Activated CD4-positive, alpha-beta T cell treated with anti-CD3 and anti-CD28 coated beads, Interleukin-2, amount 10 ng/mL, durations not matched to agents 7 days and 5 days (primary cell): ENCODE measurements at regions of chr6 and their contacts with region 1.

Region 1: DNA sequence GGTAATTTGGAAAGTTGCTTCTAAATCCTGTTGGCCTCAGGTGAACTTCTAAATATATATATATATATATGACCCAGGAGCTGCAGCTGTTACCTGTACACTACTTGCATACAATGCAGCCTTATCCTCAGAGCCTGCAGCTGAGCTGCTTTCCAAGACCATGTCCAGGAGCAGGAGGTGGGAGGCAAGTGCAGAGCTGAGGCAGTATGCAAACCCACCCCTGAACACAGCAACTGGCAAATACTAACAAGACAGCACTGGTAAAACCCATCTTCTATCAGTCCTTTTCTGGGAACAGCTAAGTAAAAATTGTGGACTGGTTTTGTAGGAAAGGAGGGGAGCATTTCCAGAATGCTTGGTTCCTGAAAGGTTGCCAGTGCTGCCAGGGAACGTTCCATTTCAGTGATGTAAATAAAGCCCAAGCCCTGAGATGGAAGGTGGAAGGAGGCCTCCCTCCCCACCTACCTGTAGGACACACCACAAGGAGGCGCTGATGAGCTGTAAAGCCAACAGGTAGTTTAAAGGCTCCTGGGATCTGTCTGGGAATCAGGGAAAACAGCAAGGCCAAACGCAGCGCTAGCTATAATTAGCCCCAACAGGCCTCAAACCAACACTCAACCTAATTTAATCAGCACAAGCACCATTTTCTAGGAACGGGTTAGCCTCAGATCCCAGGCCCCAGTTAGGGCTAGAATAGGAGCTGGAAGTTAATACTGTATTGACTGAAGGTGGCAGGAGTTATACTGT is 93.8 kb upstream of the MAP7 start:
- DNase-seq: peak; percentile 88
- H3K4me3 Mint-ChIP-seq: no peak overlapping the region
- H3K27ac Mint-ChIP-seq: no peak overlapping the region
- H3K4me1 Mint-ChIP-seq: peaks cover 6% of the 10 kb centered on the region
- H3K27me3 Mint-ChIP-seq: no peaks in the 10 kb centered on the region

Region 2: GRCh38 chr6:136582711-136583471 is 61.1 kb before region 1 on chr6:
- CTCF ChIA-PET with region 1: no interaction called
- POLR2A ChIA-PET with region 1: no interaction called
- DNase-seq: no peak
- H3K4me3 Mint-ChIP-seq: no peak overlapping the region
- H3K27ac Mint-ChIP-seq: no peak overlapping the region
- H3K4me1 Mint-ChIP-seq: no peaks in the 10 kb centered on the region
- H3K27me3 Mint-ChIP-seq: no peaks in the 10 kb centered on the region

Region 3: DNA sequence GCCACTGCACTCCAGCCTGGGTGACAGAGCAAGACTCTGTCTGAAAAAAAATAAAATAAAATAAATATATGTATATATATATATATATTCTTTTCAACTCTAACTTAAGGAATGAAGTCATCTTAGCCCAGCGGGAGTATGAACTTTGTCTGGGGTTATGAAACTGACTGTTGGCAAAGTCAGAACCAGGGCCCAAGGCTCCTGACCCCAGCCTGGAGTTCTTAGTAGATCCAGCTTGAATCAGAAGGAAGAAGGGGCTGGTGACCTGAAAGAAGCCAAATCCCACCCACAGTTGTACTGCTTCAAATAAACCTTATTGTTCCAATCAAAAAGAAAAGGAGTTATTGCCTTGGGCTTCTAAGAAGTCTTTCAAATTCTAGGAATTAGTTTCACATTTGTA is 10.7 kb before region 1 on chr6:
- CTCF ChIA-PET with region 1: interaction called, 20 read pairs
- POLR2A ChIA-PET with region 1: no interaction called
- DNase-seq: no peak
- H3K4me3 Mint-ChIP-seq: no peak overlapping the region
- H3K27ac Mint-ChIP-seq: no peak overlapping the region
- H3K4me1 Mint-ChIP-seq: peaks cover 7% of the 10 kb centered on the region
- H3K27me3 Mint-ChIP-seq: no peaks in the 10 kb centered on the region

Region 4: DNA sequence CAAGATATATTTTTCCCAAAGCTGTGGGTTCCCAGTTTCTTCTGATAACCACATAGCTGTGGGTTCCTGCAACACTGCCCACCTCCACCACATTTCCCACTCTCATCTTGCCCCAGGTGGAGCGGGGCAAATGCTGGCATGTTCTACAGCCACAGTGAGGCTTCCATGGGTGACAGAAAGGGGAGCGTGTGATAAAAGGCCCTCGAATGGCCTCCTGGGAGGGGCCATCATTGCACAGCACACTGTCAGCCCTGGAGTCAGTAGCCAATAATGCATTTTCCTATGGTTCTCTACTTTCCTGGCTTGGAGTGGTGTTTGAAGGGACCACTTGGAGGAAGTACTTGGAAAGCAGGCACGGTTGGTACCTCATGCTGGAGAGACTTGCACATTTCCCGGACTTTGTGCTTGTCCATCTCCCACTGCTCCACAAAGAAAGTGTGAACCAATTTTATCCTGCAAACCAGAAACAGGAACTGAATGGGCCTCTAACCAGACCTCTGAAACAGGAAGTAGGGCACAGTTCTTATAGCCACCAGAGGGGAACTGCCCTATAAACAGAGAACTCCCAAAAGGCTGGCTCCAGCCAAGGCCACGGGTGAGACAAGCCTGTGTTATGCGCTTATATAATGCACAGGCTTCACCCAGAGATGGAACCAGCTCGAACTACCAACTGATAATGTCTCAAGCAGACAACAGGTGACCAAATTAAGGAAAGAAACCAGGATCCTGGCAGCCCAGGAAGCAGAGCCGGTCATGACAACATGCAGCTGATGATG is 139.7 kb after region 1 on chr6:
- CTCF ChIA-PET with region 1: interaction called, 218 read pairs
- POLR2A ChIA-PET with region 1: interaction called, 3 read pairs
- DNase-seq: peak; percentile 11
- H3K4me3 Mint-ChIP-seq: peak overlapping the region; percentile 38
- H3K27ac Mint-ChIP-seq: peak overlapping the region; percentile 54
- H3K4me1 Mint-ChIP-seq: peaks cover 73% of the 10 kb centered on the region
- H3K27me3 Mint-ChIP-seq: no peaks in the 10 kb centered on the region

Region 5: GRCh38 chr6:136798031-136798430 is 154.0 kb after region 1 on chr6:
- CTCF ChIA-PET with region 1: interaction called, 218 read pairs
- POLR2A ChIA-PET with region 1: interaction called, 24 read pairs
- DNase-seq: no peak
- H3K4me3 Mint-ChIP-seq: no peak overlapping the region
- H3K27ac Mint-ChIP-seq: no peak overlapping the region
- H3K4me1 Mint-ChIP-seq: peaks cover 6% of the 10 kb centered on the region
- H3K27me3 Mint-ChIP-seq: peaks cover 9% of the 10 kb centered on the region